Activated CD4-positive, alpha-beta T cell treated with anti-CD3 and anti-CD28 coated beads, Interleukin-2, amount 10 ng/mL, durations not matched to agents 24 days and 14 days (primary cell): ENCODE measurements at regions of chr1 and their contacts with region 1.

Region 1: DNA sequence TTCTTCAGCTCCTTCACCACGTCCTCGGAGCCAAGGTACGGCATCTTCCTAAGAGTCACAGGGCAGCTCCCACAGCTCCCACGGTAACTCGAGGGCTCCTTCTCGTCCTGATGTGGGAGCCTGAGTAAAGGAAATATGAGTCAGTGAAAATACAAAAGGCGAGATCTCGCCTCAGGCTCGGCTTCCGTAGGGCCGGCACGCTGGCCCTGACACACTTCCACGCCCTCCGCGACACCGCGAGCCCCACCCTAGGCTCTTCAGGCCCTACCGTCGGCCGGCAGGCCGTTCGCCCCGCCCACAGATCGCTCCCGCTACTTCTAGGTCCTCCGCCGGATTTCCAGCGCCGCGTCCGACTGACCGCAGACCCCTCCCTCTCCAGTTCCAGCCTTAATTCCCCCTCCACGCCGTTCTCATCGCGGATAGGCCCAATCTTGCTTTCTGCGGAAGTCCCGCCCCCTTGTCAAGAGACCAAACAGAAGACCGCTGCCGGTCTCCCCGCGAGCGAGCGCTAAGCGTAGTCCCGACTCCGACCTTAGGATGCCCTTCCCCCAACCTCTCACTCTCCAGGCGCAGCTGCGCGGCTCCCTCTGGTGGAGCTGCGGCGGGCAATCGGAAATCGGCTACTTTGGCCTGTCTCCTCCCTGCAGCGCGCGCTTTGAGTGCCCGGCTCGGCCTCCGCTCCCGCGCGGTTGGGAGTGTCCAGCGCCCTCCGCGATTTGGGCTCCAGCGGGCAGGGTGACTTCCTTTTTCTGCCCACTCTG is at the starts of genes AP4B1 and DCLRE1B:
- DNase-seq: peak; percentile 99
- H3K4me3 Mint-ChIP-seq: peak within 1 kb of the TSS; percentile 99
- H3K27ac Mint-ChIP-seq: peak within 1 kb of the TSS; percentile 98
- H3K4me1 Mint-ChIP-seq: peaks cover 53% of the 10 kb centered on the region
- H3K27me3 Mint-ChIP-seq: no peaks in the 10 kb centered on the region
- total RNA-seq, gene AP4B1: 41.7 and 42.3 TPM in 2 replicates
- total RNA-seq, gene DCLRE1B: 21.5 and 22.5 TPM in 2 replicates

Region 2: GRCh38 chr1:113759333-113760101 is 145.3 kb before region 1 on chr1 and contains the start of gene PHTF1:
- intact Hi-C with region 1: loop called (anchors 2 kb)
- DNase-seq: peak; percentile 89
- H3K4me3 Mint-ChIP-seq: peak within 1 kb of the TSS; percentile 97
- H3K27ac Mint-ChIP-seq: peak within 1 kb of the TSS; percentile 97
- H3K4me1 Mint-ChIP-seq: peaks cover 30% of the 10 kb centered on the region
- H3K27me3 Mint-ChIP-seq: no peaks in the 10 kb centered on the region
- total RNA-seq, gene PHTF1: 15.6 and 19.2 TPM in 2 replicates

Region 3: DNA sequence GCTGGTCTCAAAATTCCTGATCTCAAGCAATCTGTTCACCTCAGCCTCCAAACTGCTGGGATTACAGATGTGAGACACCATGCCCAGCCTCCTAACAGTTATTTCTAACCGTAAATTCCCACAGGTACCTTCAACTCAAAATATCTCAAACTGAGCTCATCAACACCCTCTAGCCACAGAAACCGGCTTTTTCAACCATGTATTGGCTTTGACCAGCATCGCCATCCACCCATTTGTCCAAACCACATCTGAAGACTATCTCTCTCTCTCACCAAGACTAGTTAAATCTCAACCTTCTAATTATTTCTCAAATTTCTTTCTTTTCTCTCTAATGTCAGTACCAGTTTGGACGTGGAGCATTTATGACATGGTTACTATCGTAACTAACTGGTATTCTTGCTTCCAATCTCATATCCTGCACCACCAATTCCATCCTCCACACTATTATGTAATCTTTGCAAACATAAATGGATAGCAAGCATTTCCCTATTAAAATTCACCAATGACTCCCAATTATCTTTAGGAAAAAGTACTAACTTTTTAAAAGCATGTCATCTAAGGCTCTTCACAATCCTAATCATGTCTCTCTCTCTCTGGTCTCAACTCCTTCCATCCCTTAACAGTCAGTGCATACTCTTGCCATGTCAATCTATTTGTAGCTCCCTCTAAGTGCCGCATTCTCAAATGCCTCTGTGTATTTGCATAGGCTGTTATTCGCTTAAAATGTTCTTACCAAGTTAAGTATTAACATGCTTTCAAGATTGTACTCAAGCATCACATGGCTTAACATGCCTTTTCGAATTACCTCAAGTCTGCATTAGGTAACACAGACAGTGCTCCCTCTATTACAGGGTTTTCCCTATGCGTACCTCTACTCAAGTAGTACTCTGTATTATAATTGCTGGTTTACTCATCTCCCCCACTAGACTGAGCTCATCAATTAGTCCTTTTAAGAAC is 110.7 kb before region 1 on chr1:
- intact Hi-C with region 1: no loop called
- DNase-seq: no peak
- H3K4me3 Mint-ChIP-seq: no peak overlapping the region
- H3K27ac Mint-ChIP-seq: no peak overlapping the region
- H3K4me1 Mint-ChIP-seq: peaks cover 34% of the 10 kb centered on the region
- H3K27me3 Mint-ChIP-seq: no peaks in the 10 kb centered on the region

Region 4: DNA sequence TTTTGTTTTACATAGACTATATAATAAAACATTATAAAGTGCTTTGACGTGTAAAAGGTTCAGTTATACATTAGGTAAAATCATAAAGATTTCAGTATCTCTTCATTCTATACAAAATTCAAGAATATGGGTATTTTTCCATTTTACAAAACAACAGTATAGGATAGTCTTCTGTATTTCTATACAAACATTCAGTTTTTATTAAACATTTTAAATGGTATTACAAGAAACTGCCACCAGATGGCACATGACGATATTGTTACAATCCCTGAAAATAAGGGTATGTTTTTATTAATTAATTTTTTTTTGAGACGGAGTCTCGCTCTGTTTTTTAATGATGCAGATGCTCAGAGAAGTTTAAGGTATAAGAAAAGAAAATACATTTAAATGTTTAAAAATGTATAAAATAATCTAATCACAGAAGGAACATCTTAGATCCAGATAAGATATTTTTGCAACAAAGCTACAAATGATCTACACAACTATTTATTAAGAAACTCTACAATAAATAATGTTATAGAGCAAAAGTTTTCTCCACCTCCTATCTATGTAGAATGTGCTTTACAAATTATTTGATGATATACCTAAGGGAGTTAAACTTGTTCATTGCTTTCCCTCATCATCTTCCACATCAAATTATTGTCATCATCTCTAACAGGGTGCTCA is 69.1 kb before region 1 on chr1:
- intact Hi-C with region 1: loop called (anchors 1 kb)
- DNase-seq: peak; percentile 72
- H3K4me3 Mint-ChIP-seq: no peak overlapping the region
- H3K27ac Mint-ChIP-seq: no peak overlapping the region
- H3K4me1 Mint-ChIP-seq: peaks cover 4% of the 10 kb centered on the region
- H3K27me3 Mint-ChIP-seq: no peaks in the 10 kb centered on the region

Region 5: DNA sequence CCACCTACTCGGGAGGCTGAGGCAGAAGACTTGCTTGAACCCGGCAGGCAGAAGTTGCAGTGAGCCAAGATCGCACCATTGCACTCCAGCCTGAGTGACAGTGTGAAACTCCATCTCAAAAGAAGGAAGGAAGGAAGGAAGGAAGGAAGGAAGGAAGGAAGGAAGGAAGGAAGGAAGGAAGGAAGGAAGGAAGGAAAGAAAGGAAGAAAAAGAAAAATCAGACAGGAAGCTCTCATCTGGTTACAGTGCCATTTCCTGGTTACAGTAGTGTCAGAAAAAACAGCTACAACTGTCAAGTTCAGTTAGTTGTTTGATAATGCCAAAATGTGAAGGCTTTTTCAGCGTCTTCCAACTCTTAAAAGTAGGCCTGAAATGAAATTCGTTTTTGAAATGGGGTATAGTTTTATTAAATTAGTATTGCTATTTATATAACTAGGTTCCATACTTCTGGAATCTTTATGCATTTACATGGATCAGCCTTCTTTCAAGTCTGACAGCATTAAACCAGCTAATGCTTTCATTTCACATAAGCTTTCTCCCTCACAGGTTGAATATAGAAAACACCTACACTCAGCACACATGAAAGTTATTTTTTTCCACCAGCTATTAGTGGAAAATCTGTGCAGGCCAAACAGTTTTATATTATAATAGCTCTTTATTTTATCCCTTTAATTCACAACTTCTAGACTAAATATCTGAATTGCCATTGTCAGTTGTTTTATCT is 54.6 kb before region 1 on chr1:
- intact Hi-C with region 1: loop called (anchors 5 kb)
- DNase-seq: no peak
- H3K4me3 Mint-ChIP-seq: no peak overlapping the region
- H3K27ac Mint-ChIP-seq: peak overlapping the region; percentile 39
- H3K4me1 Mint-ChIP-seq: peaks cover 23% of the 10 kb centered on the region
- H3K27me3 Mint-ChIP-seq: no peaks in the 10 kb centered on the region

Region 6: GRCh38 chr1:113871597-113872113 is 33.2 kb before region 1 on chr1 and contains the start of gene PTPN22:
- intact Hi-C with region 1: loop called (anchors 1 kb)
- DNase-seq: peak; percentile 95
- H3K4me3 Mint-ChIP-seq: peak within 1 kb of the TSS; percentile 94
- H3K27ac Mint-ChIP-seq: peak within 1 kb of the TSS; percentile 96
- H3K4me1 Mint-ChIP-seq: peaks cover 63% of the 10 kb centered on the region
- H3K27me3 Mint-ChIP-seq: peaks cover 2% of the 10 kb centered on the region
- total RNA-seq, gene PTPN22: 60.4 and 64.1 TPM in 2 replicates

Region 7: DNA sequence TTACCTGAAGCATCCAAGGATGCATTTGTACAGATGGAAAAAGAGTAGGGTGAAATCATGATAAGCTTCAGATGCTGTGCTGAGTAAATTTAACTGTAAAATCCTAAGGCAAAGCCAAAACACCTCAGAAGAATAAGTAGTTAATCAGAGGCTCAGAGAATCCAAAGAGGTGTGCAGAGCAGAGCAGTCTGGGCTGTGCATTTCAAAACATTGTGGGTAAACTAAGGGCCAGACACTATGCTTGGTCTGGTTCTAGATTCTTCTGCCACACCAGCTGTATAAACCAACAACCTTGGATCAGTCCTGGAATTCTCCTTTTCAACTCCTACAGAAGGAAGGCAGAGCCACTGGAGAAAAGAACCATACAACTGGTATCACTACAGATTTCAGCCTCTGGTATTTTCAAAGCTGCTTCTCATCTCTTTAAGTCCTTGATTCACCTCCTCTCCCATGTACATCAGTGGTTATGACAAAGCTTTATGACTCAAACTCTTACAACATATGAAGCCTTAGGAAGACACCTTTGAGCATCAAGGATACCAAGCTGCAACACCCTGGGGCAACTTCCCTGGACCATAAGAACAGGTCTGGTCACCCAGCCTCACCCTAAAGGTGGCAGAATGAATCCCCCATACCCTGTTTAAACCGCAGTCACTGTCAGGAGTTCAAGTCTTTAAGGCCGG is 12.7 kb after region 1 on chr1:
- intact Hi-C with region 1: no loop called
- DNase-seq: no peak
- H3K4me3 Mint-ChIP-seq: no peak overlapping the region
- H3K27ac Mint-ChIP-seq: no peak overlapping the region
- H3K4me1 Mint-ChIP-seq: peaks cover 13% of the 10 kb centered on the region
- H3K27me3 Mint-ChIP-seq: peaks cover 3% of the 10 kb centered on the region

Region 8: DNA sequence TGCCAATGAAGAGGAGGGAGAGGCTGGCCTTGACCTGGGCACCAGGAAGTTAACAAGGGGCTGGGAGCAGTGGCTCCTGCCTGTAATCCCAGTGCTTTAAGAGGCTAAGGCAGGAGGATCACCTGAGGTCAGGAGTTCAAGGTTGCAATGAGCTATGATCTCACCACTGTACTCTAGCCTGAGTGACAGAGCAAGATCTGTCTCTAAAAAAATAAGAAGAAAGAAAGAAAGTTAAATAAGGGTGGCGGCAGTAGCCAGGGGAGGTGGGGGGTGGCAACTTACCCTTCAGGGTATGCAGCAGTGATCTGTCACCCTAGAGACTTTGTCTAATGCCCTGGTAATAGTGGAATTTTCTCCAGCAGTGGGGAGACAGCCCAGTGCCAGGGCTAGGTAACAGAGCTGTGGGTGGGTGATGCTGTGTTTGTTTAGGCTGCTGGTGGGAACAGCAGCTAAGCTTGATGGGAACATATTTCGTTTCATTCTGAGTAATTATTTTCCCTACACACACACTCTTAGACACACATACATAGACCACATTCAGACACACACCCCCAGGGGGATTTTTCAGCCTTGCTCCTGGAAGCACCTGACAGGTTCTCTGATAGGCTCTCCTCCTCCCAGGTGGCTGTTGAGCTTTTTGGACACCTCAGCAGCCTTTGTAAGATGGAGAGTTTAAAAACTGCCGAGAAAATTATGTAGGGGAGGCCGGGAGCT is 260.1 kb after region 1 on chr1:
- intact Hi-C with region 1: no loop called
- DNase-seq: no peak
- H3K4me3 Mint-ChIP-seq: no peak overlapping the region
- H3K27ac Mint-ChIP-seq: no peak overlapping the region
- H3K4me1 Mint-ChIP-seq: no peaks in the 10 kb centered on the region
- H3K27me3 Mint-ChIP-seq: peaks cover 16% of the 10 kb centered on the region

Region 9: GRCh38 chr1:114219172-114219868 is 314.5 kb after region 1 on chr1:
- intact Hi-C with region 1: no loop called
- DNase-seq: no peak
- H3K4me3 Mint-ChIP-seq: no peak overlapping the region
- H3K27ac Mint-ChIP-seq: no peak overlapping the region
- H3K4me1 Mint-ChIP-seq: peaks cover 2% of the 10 kb centered on the region
- H3K27me3 Mint-ChIP-seq: no peaks in the 10 kb centered on the region